Activated T-helper 1 cell treated with anti-CD3 and anti-CD28 coated beads, Interleukin-12 subunit alpha, Interleukin-12 subunit beta, Interleukin-2, Interleukin-4 antibody, amounts not matched to agents 30 ng/mL and 10 ng/mL and 1 ng/mL, durations not matched to agents 14 hours and 24 hours and 36 hours (primary cell): ENCODE measurements at regions of chr5 and their contacts with region 1.

Region 1: GRCh38 chr5:76544268-76544926 is 78.8 kb downstream of the F2RL2 start:
- DNase-seq: peak; percentile 41
- H3K4me3 Mint-ChIP-seq: peak overlapping the region; percentile 79
- H3K27ac Mint-ChIP-seq: peak overlapping the region; percentile 98
- H3K4me1 Mint-ChIP-seq: peaks cover 93% of the 10 kb centered on the region
- H3K27me3 Mint-ChIP-seq: no peaks in the 10 kb centered on the region

Region 2: GRCh38 chr5:75668977-75669689 is 875.3 kb before region 1 on chr5:
- intact Hi-C with region 1: loop called (anchors 10 kb)
- DNase-seq: peak; percentile 37
- H3K4me3 Mint-ChIP-seq: peak overlapping the region; percentile 79
- H3K27ac Mint-ChIP-seq: peak overlapping the region; percentile 91
- H3K4me1 Mint-ChIP-seq: peaks cover 36% of the 10 kb centered on the region
- H3K27me3 Mint-ChIP-seq: peaks cover 3% of the 10 kb centered on the region

Region 3: DNA sequence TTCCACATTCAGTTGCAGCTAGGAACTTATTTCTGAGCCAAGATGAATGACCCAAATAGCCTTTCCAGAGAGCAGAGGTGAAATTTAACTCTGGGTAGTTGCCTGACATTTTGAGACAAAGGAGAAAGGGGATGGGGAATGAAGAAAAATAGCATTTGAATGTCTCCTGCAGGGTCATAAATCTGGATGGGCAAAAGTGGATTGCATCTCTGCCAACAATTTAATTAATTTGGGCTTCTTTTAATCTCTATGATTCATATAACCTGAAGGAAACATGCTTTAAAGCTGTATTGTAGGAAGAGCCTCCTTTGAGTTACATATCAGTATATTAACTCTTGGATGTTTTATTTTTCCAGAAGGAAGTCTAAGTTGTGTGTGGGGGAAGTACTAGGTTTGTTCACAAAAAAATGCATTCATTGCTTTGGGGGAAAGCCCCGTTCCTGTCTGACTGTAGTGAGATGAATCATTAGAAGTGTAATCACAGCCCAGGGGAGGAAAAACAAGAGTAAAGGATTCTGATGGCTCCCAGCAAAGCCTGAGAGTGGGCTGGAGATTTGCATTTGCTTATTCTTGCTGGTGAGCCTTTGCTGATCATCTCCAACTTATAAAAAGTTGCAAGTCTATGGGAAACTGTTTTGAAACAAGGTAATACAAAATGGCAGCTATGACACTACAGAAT is 274.3 kb before region 1 on chr5:
- intact Hi-C with region 1: loop called (anchors 1 kb)
- DNase-seq: peak; percentile 33
- H3K4me3 Mint-ChIP-seq: peak overlapping the region; percentile 62
- H3K27ac Mint-ChIP-seq: peak overlapping the region; percentile 91
- H3K4me1 Mint-ChIP-seq: peaks cover 61% of the 10 kb centered on the region
- H3K27me3 Mint-ChIP-seq: no peaks in the 10 kb centered on the region

Region 4: DNA sequence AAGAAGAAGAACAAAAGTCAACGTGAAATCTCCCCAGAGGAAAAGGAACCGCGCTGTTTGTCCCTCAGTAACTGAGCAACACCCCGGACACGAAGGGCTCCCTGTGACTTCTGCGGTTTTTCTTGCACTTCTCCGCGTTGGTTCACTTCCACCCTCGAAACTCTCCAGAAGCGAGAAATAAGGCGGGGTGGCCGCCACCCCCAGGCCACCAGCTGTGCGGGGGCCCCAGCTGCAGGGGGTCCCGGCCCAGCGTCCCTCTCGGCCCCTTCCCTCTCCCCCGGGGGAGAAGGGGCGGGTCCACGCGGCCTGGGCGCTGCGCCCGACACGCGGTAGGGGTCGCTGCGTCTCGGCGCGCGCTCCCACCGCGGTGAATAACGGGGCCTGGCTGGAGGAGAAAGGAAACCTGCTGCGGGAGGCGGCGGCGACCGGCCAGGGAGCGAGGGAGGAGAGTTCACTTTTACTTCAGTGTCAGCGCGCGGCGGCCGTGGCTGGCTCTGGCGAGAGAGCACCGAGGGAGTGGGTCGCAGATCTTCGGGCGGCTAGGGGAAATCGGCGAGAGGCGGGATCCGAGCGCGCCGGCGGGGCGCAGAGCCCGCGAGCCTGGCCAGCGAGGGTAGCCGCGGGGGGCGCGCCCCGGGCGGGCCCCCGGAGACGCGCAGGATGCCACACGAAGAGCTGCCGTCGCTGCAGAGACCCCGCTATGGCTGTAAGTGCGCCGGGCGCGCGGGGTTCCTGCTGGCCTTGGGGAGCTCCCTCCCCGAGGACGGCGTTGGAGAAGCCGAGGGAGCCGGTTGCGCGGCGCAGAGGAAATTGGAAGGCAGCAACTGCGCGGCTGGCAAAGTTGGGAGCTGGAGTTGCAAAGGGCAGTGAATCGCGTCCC is 141.3 kb before region 1 on chr5 and contains the start of gene IQGAP2:
- intact Hi-C with region 1: loop called (anchors 1 kb)
- DNase-seq: peak; percentile 79
- H3K4me3 Mint-ChIP-seq: peak within 1 kb of the TSS; percentile 98
- H3K27ac Mint-ChIP-seq: peak within 1 kb of the TSS; percentile 99
- H3K4me1 Mint-ChIP-seq: peaks cover 60% of the 10 kb centered on the region
- H3K27me3 Mint-ChIP-seq: peaks cover 4% of the 10 kb centered on the region
- total RNA-seq, gene IQGAP2: 43.5 and 45.4 TPM in 2 replicates

Region 5: GRCh38 chr5:76528547-76529331 is 15.7 kb before region 1 on chr5:
- intact Hi-C with region 1: loop called (anchors 1 kb)
- DNase-seq: no peak
- H3K4me3 Mint-ChIP-seq: no peak overlapping the region
- H3K27ac Mint-ChIP-seq: peak overlapping the region; percentile 53
- H3K4me1 Mint-ChIP-seq: peaks cover 56% of the 10 kb centered on the region
- H3K27me3 Mint-ChIP-seq: no peaks in the 10 kb centered on the region

Region 6: DNA sequence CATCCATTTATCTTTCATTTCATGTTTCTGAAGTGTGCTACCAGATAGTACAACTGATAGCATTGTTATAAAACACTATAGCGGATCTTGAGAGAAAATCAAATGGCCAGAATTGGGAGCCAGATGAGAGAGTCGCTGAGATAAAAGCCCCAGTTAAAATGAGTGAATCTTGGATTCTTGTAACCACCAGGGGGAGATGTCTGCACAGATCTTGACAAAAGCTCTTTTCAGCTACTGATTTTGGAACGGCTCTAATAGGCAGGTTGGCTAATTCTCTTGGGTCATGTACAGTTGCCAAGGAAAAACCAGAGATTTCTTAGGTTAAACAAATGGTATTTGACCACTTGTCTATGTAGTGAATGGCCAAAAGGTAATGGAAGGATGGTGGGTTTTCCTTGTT is 57.1 kb after region 1 on chr5:
- intact Hi-C with region 1: no loop called
- DNase-seq: no peak
- H3K4me3 Mint-ChIP-seq: no peak overlapping the region
- H3K27ac Mint-ChIP-seq: no peak overlapping the region
- H3K4me1 Mint-ChIP-seq: peaks cover 25% of the 10 kb centered on the region
- H3K27me3 Mint-ChIP-seq: no peaks in the 10 kb centered on the region

Region 7: DNA sequence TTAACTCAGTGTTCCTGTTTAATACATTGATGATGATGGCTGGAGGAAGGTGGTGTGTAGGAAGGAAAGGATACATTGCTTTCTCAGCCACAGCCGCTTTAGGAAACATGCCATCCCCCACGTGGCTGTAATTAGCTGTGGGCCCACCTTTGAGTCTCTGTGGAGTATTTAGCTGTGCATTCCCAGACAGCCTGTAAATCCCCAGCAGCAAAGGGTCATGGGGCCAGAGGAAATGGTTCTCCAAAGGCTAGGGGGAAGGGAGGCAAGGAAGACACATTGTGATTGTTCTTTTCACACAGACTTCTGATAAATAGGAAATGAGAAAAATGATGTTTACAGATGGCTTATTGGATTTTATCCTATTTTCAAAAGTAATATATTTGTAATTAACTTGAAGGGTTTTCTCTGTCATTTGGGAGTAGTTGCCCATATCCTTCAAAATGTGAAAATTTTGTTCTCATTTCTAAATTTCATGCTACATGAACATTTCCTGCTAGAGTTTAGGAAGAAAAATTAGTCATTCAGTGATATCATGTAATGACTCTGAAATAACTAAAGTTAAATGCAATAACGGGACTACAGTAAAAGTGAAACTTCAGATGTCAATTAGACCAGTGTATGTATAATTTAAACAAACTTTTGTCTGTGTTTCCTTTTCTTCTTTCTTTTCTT is 147.2 kb after region 1 on chr5:
- intact Hi-C with region 1: loop called (anchors 2 kb)
- DNase-seq: no peak
- H3K4me3 Mint-ChIP-seq: no peak overlapping the region
- H3K27ac Mint-ChIP-seq: peak overlapping the region; percentile 78
- H3K4me1 Mint-ChIP-seq: peaks cover 45% of the 10 kb centered on the region
- H3K27me3 Mint-ChIP-seq: no peaks in the 10 kb centered on the region

Region 8: DNA sequence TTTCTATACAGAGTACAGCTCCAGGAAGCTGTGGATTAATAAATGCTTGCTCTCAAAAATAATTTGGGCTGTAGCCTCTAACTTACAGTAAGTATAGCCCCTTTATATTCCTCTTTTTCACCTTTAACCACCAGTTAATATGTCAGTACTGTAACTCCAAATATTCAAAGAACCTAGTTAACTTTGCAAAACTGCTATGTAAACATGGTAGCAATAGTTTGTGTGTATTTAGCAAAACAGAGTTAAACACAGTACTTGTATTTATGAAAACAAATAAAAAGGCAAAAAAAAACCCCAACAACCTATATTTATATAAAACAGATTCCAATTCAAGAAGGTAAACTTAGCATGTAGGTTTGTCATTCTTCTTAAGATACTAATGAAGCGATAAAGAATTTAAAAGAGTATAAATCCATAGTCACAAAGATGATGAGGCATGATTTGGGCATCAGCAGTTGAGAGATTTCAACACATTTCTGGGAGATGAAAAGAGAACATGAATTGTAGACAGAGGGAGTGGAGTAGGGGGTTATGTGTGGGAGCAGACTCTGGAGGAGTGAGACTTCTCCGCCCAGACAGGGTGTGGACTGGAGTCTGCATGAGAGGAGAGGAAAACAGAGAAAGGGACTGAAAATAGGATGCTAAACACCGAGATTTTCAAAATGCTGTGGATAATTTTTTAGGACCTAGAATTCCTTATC is 227.5 kb after region 1 on chr5:
- intact Hi-C with region 1: loop called (anchors 1 kb)
- DNase-seq: no peak
- H3K4me3 Mint-ChIP-seq: no peak overlapping the region
- H3K27ac Mint-ChIP-seq: no peak overlapping the region
- H3K4me1 Mint-ChIP-seq: no peaks in the 10 kb centered on the region
- H3K27me3 Mint-ChIP-seq: no peaks in the 10 kb centered on the region

Region 9: GRCh38 chr5:76926329-76927105 is 382.1 kb after region 1 on chr5:
- intact Hi-C with region 1: no loop called
- DNase-seq: no peak
- H3K4me3 Mint-ChIP-seq: no peak overlapping the region
- H3K27ac Mint-ChIP-seq: no peak overlapping the region
- H3K4me1 Mint-ChIP-seq: no peaks in the 10 kb centered on the region
- H3K27me3 Mint-ChIP-seq: peaks cover 6% of the 10 kb centered on the region